ENCODE measurements at regions of chr17 and their contacts with region 1.

Region 1: DNA sequence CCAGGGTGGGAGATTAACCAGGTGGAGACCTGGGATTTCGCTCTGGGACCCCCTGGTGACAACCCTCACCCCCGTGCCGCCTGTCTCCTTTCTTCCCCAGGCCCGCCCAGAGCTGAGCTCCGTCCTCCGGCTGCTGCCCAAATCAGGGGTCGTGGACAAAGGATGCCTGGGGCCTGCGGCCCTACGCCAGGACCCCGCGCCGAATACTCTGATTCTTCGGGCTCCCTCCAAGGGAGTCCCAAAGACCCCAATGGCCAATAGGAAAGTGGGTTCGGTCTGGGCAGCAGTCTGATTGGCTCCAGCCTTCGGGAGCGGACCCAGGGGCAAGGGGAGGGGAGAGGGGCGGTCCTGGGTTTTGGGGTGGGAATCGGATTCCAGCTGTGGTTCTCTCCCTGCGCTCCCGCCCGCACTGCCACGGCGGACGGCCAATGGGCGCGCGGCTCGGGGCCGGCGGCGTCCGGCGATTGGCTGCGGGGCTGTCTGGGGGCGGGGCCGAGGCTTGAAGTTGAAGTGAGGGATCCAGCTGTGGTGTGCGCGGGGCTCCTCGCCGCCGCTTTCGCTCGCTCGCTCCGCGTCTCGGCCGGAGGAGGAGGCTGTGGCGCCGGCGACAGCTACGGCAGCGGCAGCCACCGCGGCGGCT is at the start of gene CACNA1G:
- DNase-seq: peak; percentile 98
- H3K4me3 ChIP-seq: peak within 1 kb of the TSS; percentile 59
- H3K27ac ChIP-seq: peak within 1 kb of the TSS; percentile 57
- H3K4me1 ChIP-seq: peaks cover 48% of the 10 kb centered on the region
- H3K27me3 ChIP-seq: peaks cover 11% of the 10 kb centered on the region
- CTCF ChIP-seq: no peak
- total RNA-seq, gene CACNA1G: 7.1 and 10.8 TPM in 2 replicates

Region 2: DNA sequence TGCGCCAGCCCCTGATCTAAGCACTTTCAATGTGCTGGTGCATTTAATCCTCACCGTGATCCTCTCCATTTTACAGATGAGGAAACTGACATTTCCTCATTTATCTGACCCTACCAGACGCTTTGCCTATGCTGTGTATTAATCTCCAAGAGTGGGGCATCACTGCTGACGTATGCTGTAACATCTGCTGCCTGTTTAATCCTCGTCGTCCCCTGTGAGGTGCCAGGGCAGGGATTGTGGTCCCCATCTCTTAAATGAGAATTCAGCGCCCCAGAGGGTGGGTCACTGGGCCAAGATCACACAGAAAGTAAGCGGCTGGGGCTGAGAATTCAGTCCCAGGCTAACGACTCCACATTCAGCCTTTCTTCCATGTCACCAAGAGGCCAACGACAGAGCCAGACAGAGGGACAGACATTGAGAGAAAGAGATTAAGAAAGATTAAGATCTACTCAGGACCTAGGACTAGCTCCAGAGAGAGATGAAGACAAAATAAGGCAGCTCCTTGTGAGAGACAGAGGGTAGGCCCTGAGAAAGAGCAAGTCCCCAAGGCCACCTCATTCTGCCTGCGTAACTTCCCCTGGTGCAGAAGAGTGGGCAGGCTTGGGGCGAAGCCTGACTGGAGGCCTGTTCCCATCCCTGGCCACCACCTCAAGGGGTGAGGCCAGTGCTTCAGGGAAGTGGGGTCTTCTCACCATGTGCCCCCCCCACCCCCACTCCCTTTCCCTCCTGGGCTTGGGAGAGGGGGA is 13.7 kb after region 1 on chr17:
- CTCF ChIA-PET with region 1: interaction called, 11 read pairs
- POLR2A ChIA-PET with region 1: no interaction called
- intact Hi-C with region 1: no loop called
- DNase-seq: no peak
- H3K4me3 ChIP-seq: no peak overlapping the region
- H3K27ac ChIP-seq: peak overlapping the region; percentile 44
- H3K4me1 ChIP-seq: peaks cover 7% of the 10 kb centered on the region
- H3K27me3 ChIP-seq: no peaks in the 10 kb centered on the region
- CTCF ChIP-seq: no peak

Region 3: DNA sequence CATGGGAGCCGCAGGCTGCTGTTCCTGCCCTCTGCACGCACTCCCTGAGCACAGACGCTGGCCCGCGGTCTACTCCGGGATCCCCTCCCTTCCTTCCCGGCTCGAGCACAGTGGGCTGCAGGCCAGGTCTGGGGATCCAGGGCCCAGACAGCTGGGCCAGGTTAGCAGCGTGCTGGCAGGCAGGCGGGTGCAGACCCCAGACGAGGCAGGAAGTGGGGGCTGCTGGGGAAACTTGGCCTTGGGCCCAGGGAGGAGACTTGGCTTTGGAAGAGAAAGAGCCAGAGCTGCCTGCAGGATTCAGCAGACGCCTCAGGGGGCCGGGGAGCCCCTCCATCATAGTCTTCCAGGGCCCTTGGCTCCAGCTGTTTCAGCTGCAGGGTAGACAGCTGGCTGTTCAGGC is 44.2 kb after region 1 on chr17:
- CTCF ChIA-PET with region 1: no interaction called
- POLR2A ChIA-PET with region 1: no interaction called
- intact Hi-C with region 1: loop called (anchors 5 kb)
- DNase-seq: peak; percentile 88
- H3K4me3 ChIP-seq: no peak overlapping the region
- H3K27ac ChIP-seq: peak overlapping the region; percentile 56
- H3K4me1 ChIP-seq: peaks cover 18% of the 10 kb centered on the region
- H3K27me3 ChIP-seq: no peaks in the 10 kb centered on the region
- CTCF ChIP-seq: no peak

Region 4: GRCh38 chr17:50626037-50626574 is 65.8 kb after region 1 on chr17:
- CTCF ChIA-PET with region 1: interaction called, 3 read pairs
- POLR2A ChIA-PET with region 1: interaction called, 13 read pairs
- intact Hi-C with region 1: no loop called
- DNase-seq: peak; percentile 81
- H3K4me3 ChIP-seq: no peak overlapping the region
- H3K27ac ChIP-seq: no peak overlapping the region
- H3K4me1 ChIP-seq: peaks cover 22% of the 10 kb centered on the region
- H3K27me3 ChIP-seq: no peaks in the 10 kb centered on the region
- CTCF ChIP-seq: peak; percentile 76